ENCODE measurements at regions of chr1 and their contacts with region 1.

Region 1: GRCh38 chr1:88318740-88319139 is 365.3 kb upstream of the PKN2 start:
- DNase-seq: no peak
- ATAC-seq: peak in 2 of 8 donors; percentile 42 to 71
- H3K4me3 ChIP-seq: no peak overlapping the region
- H3K27ac ChIP-seq: no peak overlapping the region
- H3K4me1 ChIP-seq: no peaks in the 10 kb centered on the region
- H3K27me3 ChIP-seq: no peaks in the 10 kb centered on the region
- CTCF ChIP-seq: no peak

Region 2: GRCh38 chr1:88357729-88358128 is 39.0 kb after region 1 on chr1:
- intact Hi-C with region 1: loop called in 1 of 10 experiments (anchors 1 kb)
- DNase-seq: no peak
- ATAC-seq: no peak
- H3K4me3 ChIP-seq: no peak overlapping the region
- H3K27ac ChIP-seq: no peak overlapping the region
- H3K4me1 ChIP-seq: no peaks in the 10 kb centered on the region
- H3K27me3 ChIP-seq: no peaks in the 10 kb centered on the region
- CTCF ChIP-seq: no peak

Region 3: DNA sequence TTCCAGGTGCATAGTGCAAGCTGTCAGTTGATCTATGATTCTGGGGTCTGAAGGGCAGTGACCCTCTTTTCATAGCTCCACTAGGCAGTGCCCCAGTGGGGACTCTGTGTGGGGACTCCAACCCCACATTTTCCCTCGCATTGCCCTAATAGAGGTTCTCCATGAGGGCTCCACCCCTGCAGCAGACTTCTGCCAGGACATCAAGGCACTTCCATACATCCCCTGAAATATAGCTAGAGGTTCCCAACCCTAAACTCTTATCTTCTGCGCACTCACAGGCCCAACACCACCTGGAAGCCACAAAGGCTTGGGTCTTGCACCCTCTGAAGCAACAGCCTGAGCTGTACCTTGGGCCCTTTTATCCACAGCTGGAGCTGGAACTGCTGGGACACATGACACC is 299.6 kb after region 1 on chr1:
- intact Hi-C with region 1: no loop called
- DNase-seq: no peak
- ATAC-seq: no peak
- H3K4me3 ChIP-seq: no peak overlapping the region
- H3K27ac ChIP-seq: no peak overlapping the region
- H3K4me1 ChIP-seq: no peaks in the 10 kb centered on the region
- H3K27me3 ChIP-seq: no peaks in the 10 kb centered on the region
- CTCF ChIP-seq: no peak

Region 4: DNA sequence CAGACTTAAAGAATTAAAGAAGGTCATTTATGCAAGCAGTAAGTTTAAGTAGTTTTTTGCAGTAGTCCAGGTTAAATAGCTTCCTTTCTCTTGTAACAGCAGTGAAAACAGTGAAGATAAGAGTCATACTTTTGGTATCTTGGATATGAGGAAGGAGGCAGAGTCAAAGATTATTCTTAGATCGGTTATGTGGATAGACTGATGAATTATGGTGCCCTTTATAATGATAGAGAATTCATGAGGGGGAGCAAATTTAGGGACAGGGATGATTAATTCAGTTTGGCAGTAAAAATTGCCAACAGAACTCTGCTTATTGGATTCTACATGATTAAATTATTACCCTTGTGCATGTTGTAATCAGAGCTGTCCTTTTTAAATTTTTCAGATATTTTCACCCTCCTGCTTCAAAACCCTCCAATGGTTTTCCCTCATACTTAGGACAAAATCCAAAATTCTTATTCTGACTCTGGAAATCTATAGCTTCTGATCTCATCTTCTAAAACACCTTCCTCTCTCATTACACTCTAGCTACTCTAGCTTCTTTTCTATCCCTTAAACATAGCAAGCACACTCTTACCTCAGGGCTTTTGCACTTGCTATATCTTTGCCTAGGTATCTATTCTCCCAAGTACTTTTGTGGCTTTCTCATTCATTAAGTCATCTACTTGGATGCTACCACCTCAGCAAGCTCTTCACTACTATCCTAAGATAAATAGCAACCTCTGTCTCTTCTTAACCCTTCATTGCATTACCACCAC is 445.1 kb after region 1 on chr1:
- intact Hi-C with region 1: no loop called
- DNase-seq: no peak
- ATAC-seq: no peak
- H3K4me3 ChIP-seq: no peak overlapping the region
- H3K27ac ChIP-seq: no peak overlapping the region
- H3K4me1 ChIP-seq: peaks cover 0 to 14% (median 0%) of the 10 kb centered on the region in 9 donors
- H3K27me3 ChIP-seq: no peaks in the 10 kb centered on the region
- CTCF ChIP-seq: no peak